Uterus (tissue), 4 donors: ENCODE measurements at regions of chr19 and their contacts with region 1.

Region 1: DNA sequence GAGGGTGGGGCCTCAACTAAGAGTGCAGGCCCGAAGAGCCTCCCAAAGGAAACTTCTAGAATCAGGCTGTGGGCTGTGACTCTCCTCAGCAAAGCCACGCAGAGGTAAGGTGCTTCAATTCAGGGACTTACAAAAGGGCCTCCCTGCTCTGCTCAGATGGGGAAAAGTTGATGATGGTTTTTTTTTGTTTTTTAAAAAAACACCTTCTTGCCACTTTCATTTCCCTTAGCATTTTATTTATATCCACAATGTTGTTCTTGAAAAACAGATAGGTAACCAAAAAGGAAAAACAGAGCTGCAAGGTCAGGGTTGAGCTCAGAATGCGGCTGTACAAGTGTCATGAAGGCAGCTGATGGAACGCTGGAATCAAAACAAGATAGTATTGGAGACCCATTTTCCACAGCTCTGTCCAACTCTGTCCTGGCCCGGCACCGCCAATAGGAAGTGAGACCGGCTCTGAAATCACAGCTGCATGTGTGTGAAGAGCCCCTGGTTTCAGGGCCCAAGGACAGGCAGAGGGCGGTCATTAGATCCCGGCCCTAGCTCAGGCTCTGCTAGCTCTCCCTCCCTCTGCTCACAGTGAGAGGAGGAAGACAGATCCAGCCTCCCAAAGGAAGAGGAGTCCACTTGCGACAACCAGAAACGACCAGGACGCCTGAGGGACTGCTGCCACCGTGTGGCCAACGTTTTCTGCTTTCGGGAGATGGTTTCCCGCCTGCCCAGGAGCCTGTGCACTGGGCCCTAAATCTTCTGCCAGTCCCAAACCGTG is 58.3 kb downstream of the KLF2 start:
- DNase-seq: peak; percentile 92
- H3K4me3 ChIP-seq: no peak overlapping the region
- H3K27ac ChIP-seq: peak overlapping the region; percentile 87 to 89
- H3K4me1 ChIP-seq: peaks cover 17 to 24% of the 10 kb centered on the region in 2 donors
- H3K27me3 ChIP-seq: no peaks in the 10 kb centered on the region
- CTCF ChIP-seq: peak; percentile 92 to 95 (median 92)
- POLR2A ChIP-seq: peak; percentile 35 to 38

Region 2: GRCh38 chr19:16244091-16244490 is 138.9 kb before region 1 on chr19:
- intact Hi-C with region 1: loop called (anchors 2 kb)
- DNase-seq: no peak
- H3K4me3 ChIP-seq: no peak overlapping the region
- H3K27ac ChIP-seq: no peak overlapping the region
- H3K4me1 ChIP-seq: no peaks in the 10 kb centered on the region
- H3K27me3 ChIP-seq: no peaks in the 10 kb centered on the region
- CTCF ChIP-seq: no peak
- POLR2A ChIP-seq: no peak

Region 3: DNA sequence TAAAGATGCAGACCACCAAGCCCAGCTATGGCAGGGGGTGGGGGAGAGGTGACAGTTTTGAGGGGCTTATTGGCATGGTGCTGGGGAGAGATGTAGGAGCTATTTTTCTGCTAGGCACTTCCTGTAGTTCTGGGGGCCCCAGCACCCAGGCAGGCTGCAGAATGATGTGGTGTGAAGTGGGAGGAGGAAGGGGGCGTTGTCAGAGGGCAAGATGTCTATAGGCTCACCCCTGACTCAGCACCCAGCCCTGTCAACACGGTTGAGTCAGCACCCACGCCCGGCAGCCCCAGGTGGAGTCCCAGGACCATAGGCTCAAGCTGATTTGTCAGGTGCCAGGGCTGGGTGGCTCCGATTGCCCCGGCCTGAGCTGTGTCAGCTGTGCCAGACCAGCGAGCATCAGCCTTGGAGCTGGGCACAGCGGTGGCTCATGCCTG is 52.6 kb before region 1 on chr19:
- intact Hi-C with region 1: loop called (anchors 10 kb)
- DNase-seq: peak; percentile 54 to 75
- H3K4me3 ChIP-seq: no peak overlapping the region
- H3K27ac ChIP-seq: peak overlapping the region; percentile 54 to 95
- H3K4me1 ChIP-seq: peaks cover 7 to 15% of the 10 kb centered on the region in 2 donors
- H3K27me3 ChIP-seq: no peaks in the 10 kb centered on the region
- CTCF ChIP-seq: no peak
- POLR2A ChIP-seq: no peak